ENCODE measurements at regions of chr19 and their contacts with region 1.

Region 1: GRCh38 chr19:28727480-28728159 is 485.3 kb downstream of the UQCRFS1 start:
- ATAC-seq: peak in 6 of 8 experiments; percentile 13 to 85 (median 74)
- H3K4me3 ChIP-seq: peak overlapping the region in 2 of 5 donors; percentile 36 to 40
- H3K27ac ChIP-seq: no peak overlapping the region
- H3K4me1 ChIP-seq: no peaks in the 10 kb centered on the region

Region 2: GRCh38 chr19:28485292-28485691 is 242.3 kb before region 1 on chr19:
- in situ Hi-C with region 1: no loop called
- ATAC-seq: peak in 2 of 8 experiments; percentile 20 to 40
- H3K4me3 ChIP-seq: no peak overlapping the region
- H3K27ac ChIP-seq: no peak overlapping the region
- H3K4me1 ChIP-seq: peaks cover 8 to 23% of the 10 kb centered on the region in 2 donors

Region 3: DNA sequence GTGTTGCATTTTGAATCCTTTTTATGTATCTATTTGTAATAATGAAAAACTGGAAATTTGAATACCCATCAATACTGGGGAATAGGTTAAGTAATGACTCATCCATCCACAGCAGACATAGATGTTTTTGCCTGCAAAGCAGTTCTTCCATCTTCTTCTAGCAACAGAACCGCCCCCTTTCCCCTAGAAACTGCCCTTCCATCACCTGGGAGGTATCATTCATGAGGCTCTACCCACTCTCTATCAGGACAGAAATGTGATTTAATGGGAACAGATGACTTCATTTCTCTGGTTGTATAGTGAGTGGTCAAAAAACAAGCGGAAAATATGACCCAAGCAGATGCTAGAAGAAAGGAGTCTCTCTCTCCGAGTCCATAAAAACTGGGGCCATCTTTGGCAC is 47.5 kb before region 1 on chr19:
- in situ Hi-C with region 1: no loop called
- ATAC-seq: peak in 4 of 8 experiments; percentile 44 to 65 (median 49)
- H3K4me3 ChIP-seq: no peak overlapping the region
- H3K27ac ChIP-seq: no peak overlapping the region
- H3K4me1 ChIP-seq: no peaks in the 10 kb centered on the region

Region 4: DNA sequence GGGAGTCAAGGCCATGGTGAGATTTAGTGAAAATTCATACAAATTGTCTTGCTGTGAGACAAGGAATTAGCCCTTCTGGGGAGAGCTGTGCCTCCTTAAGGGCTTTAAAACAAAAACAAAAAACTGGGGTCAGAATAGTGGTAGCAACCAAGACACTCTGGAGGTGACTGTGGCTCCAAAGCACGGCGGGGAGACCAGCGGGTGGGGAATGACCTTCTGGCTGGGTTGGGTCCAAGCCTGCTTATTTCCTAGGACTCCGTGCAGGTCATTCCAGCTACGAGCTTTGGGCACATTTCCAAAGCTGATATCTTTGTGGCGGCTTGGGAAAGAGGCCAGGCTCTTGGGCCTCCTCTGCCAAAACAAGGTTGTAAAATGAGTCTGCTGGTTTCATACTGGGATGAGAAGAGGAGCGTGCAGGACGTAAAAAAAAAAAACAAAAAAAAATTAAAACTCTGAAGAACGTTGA is 137.0 kb after region 1 on chr19:
- in situ Hi-C with region 1: loop called in 2 of 9 experiments (anchors 5 to 25 kb)
- ATAC-seq: no peak
- H3K4me3 ChIP-seq: no peak overlapping the region
- H3K27ac ChIP-seq: no peak overlapping the region
- H3K4me1 ChIP-seq: peaks cover 2% of the 10 kb centered on the region in 2 donors

Measured in motor neuron (in vitro differentiated cells).